Calu3 (cell line): ENCODE measurements at regions of chr1 and their contacts with region 1.

Region 1: GRCh38 chr1:28088168-28088961 is at the start of gene EYA3:
- DNase-seq: peak; percentile 97
- H3K4me3 Mint-ChIP-seq: peak within 1 kb of the TSS; percentile 95
- H3K27ac Mint-ChIP-seq: peak within 1 kb of the TSS; percentile 89
- H3K4me1 Mint-ChIP-seq: peaks cover 10% of the 10 kb centered on the region
- H3K27me3 Mint-ChIP-seq: no peaks in the 10 kb centered on the region
- CTCF ChIP-seq: no peak
- total RNA-seq, gene EYA3: 15.0 and 18.8 TPM in 2 replicates

Region 2: DNA sequence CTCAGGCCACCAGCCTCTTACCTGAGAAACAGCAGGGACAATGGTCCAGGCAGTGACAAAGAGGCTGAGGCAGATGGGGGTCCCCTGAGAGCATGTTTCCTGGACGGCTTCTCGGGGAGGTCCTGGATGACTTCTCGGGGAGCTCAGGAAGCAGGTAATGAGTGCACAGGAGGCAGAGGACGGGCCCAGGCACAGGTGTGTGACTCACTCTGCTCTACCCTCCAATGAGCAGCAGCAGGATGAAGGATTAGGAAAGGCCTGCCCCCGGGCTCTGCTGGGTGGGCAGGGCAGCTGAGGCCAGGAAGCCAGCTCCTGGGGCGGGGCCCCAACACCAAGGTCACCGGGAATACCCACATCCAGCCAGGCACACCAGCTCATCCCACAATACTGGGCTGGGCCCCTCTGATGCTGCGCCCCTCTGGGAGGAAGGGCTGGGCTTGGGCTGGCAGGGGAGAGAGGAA is 105.4 kb after region 1 on chr1:
- CTCF ChIA-PET with region 1: no interaction called
- intact Hi-C with region 1: loop called (anchors 5 kb)
- DNase-seq: peak; percentile 61
- H3K4me3 Mint-ChIP-seq: peak overlapping the region; percentile 42
- H3K27ac Mint-ChIP-seq: no peak overlapping the region
- H3K4me1 Mint-ChIP-seq: peaks cover 31% of the 10 kb centered on the region
- H3K27me3 Mint-ChIP-seq: no peaks in the 10 kb centered on the region
- CTCF ChIP-seq: no peak

Region 3: DNA sequence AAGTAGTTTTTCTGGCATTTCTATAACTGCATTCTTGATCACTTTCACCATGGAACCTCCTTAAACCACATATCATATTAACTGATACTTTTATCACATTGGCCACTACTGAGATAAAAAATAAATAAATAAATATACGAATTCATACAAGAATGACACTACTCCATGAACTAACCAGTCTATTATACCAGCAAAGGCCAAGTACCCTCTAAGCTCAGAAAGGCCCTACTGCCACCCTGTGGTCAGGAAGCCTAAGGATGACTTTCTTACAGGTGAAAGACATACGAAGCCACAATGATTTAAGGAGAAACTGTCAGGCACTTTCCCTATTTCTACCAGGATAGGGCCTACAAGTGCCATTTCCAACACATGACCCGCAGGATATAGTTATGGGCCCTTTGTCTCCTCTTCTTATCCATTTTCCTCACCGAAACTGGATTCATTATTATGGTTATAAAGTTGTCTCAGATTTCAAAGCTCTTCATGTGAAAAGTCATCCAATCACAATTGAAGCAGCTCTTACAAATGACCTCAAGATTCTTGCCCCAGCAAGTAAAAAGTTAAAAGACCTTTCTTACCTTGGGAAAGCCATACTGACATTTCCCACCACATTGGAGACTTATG is 120.6 kb after region 1 on chr1:
- CTCF ChIA-PET with region 1: interaction called, 23 read pairs
- intact Hi-C with region 1: loop called (anchors 1 kb)
- DNase-seq: peak; percentile 53
- H3K4me3 Mint-ChIP-seq: no peak overlapping the region
- H3K27ac Mint-ChIP-seq: no peak overlapping the region
- H3K4me1 Mint-ChIP-seq: no peaks in the 10 kb centered on the region
- H3K27me3 Mint-ChIP-seq: no peaks in the 10 kb centered on the region
- CTCF ChIP-seq: peak; percentile 36